Activated CD4-positive, alpha-beta T cell treated with anti-CD3 and anti-CD28 coated beads for 36 hours (primary cell): ENCODE measurements at regions of chr7 and their contacts with region 1.

Region 1: DNA sequence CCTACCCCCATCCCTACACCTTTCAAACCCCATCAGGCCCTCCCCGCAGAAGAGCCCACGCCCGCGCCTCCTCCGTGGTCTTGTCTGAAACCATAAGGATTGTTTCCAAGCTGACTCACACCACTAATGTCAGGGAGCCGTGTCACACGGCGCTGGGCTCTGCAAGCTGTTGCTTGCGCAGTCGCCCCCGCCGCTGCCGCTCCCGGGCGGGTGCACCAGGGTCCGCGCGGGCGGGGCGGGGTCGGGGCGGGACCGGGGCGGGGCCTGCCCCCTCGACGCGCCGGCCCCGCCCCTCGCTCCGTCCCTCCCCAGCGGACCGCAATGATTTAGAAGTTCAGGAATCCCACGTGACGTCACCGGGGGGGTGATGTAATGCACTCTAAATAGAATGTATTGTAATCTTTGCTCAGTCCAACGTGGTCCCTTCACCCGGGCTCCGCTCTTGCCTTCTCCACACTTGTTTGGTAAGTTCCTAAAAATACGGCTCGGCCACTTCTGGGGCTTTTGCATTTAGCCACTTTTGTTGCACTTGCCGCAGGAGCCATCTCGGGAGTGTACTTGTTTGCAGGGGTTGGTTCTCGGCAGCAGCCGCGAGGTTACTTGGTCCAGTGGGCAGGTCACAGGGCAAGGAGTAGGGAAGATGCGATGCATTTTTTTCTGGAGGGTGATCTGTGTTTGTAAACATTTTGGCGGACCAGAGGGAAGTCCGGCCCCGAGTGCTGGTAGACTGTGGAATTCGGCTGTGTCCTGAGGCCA is 3.2 kb upstream of the CREB5 start:
- DNase-seq: peak; percentile 91
- ATAC-seq: peak; percentile 86
- H3K4me3 Mint-ChIP-seq: peak overlapping the region; percentile 75
- H3K27ac Mint-ChIP-seq: peak overlapping the region; percentile 70
- H3K4me1 Mint-ChIP-seq: peaks cover 39% of the 10 kb centered on the region
- H3K27me3 Mint-ChIP-seq: peaks cover 62% of the 10 kb centered on the region

Region 2: DNA sequence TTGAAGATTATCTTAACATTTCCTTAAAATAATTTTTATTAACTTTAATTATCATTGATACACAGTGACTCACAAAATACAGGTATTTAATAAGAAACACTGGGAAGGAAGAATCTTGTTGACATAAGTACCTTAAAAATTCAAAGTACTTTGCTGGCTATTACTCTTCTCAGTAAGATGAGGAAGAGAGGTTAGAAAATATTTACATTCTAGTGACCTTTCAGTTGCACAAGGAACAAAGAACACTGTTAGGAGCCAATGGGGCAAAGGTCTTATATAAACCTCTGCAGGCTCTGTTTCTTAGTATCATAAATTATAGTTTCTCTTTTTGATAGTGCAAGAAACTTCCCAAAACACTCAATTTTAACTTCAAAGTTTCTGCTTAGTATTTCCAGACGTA is 674.0 kb before region 1 on chr7:
- CTCF ChIA-PET with region 1: no interaction called
- POLR2A ChIA-PET with region 1: no interaction called
- intact Hi-C with region 1: no loop called
- DNase-seq: no peak
- ATAC-seq: no peak
- H3K4me3 Mint-ChIP-seq: no peak overlapping the region
- H3K27ac Mint-ChIP-seq: no peak overlapping the region
- H3K4me1 Mint-ChIP-seq: peaks cover 5% of the 10 kb centered on the region
- H3K27me3 Mint-ChIP-seq: peaks cover 2% of the 10 kb centered on the region

Region 3: GRCh38 chr7:28329661-28330363 is 79.3 kb before region 1 on chr7:
- CTCF ChIA-PET with region 1: interaction called, 3 read pairs
- POLR2A ChIA-PET with region 1: no interaction called
- intact Hi-C with region 1: loop called (anchors 2 to 5 kb)
- DNase-seq: peak; percentile 26
- ATAC-seq: peak; percentile 56
- H3K4me3 Mint-ChIP-seq: peak overlapping the region; percentile 4
- H3K27ac Mint-ChIP-seq: no peak overlapping the region
- H3K4me1 Mint-ChIP-seq: peaks cover 36% of the 10 kb centered on the region
- H3K27me3 Mint-ChIP-seq: peaks cover 6% of the 10 kb centered on the region

Region 4: GRCh38 chr7:28442540-28443420 is 33.6 kb after region 1 on chr7:
- CTCF ChIA-PET with region 1: no interaction called
- POLR2A ChIA-PET with region 1: no interaction called
- intact Hi-C with region 1: loop called (anchors 1 to 2 kb)
- DNase-seq: peak; percentile 10
- ATAC-seq: peak; percentile 84
- H3K4me3 Mint-ChIP-seq: no peak overlapping the region
- H3K27ac Mint-ChIP-seq: no peak overlapping the region
- H3K4me1 Mint-ChIP-seq: peaks cover 16% of the 10 kb centered on the region
- H3K27me3 Mint-ChIP-seq: peaks cover 48% of the 10 kb centered on the region